PC-9 (cell line): ENCODE measurements at regions of chr9 and their contacts with region 1.

Region 1: DNA sequence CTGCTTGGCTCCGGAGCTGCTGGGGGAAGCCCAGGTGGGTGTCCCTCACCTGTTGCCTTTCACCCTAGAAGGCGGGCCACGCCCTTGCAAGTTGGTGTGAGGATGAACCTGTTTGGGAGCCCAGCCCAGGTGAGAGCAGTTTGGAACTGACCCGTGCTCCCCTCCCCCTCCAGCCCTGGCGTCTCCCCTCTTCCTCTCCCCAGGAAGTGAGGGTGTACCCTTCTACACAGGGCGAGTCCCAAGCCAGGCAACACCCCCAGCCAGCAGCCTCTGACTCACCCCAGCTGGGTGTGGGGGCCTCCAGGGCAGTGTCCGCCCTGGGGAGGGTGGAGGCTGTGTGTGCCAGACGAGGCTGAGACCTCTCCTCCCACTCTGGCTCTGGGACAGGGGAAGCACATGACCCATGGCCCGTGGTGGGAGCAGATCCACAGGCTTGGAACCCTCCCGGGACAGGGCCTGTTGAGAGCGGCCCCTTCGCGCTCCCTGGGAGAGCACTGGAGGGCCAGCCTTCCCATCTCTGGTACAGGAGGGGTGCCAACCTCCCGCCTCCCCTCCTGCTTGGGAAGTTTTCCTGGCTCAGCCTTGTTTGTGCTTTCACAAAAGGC is 10.5 kb downstream of the LRRC8A start:
- DNase-seq: peak; percentile 94 to 99
- H3K4me3 ChIP-seq: peak overlapping the region; percentile 31; the same call in 1 of the 2 replicates
- H3K27ac ChIP-seq: peak overlapping the region; percentile 79
- H3K4me1 ChIP-seq: peaks cover 26% of the 10 kb centered on the region
- H3K27me3 ChIP-seq: no peaks in the 10 kb centered on the region
- CTCF ChIP-seq: no peak

Region 2: GRCh38 chr9:128875790-128876160 is 16.6 kb before region 1 on chr9:
- CTCF ChIA-PET with region 1: no interaction called
- POLR2A ChIA-PET with region 1: no interaction called
- intact Hi-C with region 1: loop called (anchors 2 kb)
- DNase-seq: peak; percentile 63 to 81
- H3K4me3 ChIP-seq: no peak overlapping the region
- H3K27ac ChIP-seq: peak overlapping the region; percentile 92
- H3K4me1 ChIP-seq: peaks cover 29% of the 10 kb centered on the region
- H3K27me3 ChIP-seq: no peaks in the 10 kb centered on the region
- CTCF ChIP-seq: no peak

Region 3: DNA sequence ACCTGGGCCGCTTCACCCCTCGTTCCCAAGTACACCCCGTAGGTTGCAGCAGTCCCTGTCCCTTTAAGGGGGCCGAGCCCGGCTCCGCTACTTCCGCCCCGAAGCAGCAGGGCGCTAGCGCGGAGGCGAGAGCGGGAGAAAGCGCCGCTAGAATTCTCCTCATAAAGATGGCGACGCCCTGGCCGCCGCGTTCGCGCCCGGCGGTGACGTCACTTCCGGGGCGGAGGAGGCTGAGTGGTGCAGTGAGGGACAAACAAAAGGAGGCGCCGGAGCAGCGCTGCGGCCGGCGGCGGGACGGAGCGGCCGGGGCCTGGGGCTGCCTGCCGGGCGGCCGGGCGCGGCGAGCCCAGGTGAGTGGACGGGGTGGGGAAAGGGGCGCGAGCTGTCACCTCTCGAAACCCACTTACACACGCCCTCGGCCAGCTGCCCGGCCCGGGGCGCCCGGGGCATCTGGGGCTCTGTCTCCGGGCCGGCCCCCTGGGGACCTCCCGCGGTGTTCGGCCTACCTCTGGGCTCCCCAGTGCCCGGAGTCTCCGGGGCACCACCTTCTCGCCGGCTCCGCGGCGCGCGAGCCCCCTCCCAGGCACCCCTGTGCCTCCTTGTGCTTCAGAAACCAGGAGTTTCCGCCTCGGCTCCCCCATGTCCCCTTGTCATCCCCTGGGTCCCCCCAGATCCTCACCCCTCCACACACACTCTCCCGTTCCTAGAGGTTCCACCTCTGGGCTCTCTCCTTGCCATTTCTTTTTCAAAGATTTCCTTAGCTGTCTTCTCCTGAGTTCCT is 10.3 kb before region 1 on chr9 and contains the starts of genes KYAT1 and LRRC8A:
- CTCF ChIA-PET with region 1: no interaction called
- POLR2A ChIA-PET with region 1: interaction called, 4 read pairs
- intact Hi-C with region 1: loop called (anchors 1 kb)
- DNase-seq: peak; percentile 89 to 99
- H3K4me3 ChIP-seq: peak within 1 kb of the TSS; percentile 87
- H3K27ac ChIP-seq: peak within 1 kb of the TSS; percentile 77
- H3K4me1 ChIP-seq: peaks cover 20% of the 10 kb centered on the region
- H3K27me3 ChIP-seq: no peaks in the 10 kb centered on the region
- CTCF ChIP-seq: no peak
- total RNA-seq, gene KYAT1: 26.1 and 27.6 TPM in 2 replicates
- total RNA-seq, gene LRRC8A: 90.3 and 95.7 TPM in 2 replicates

Region 4: DNA sequence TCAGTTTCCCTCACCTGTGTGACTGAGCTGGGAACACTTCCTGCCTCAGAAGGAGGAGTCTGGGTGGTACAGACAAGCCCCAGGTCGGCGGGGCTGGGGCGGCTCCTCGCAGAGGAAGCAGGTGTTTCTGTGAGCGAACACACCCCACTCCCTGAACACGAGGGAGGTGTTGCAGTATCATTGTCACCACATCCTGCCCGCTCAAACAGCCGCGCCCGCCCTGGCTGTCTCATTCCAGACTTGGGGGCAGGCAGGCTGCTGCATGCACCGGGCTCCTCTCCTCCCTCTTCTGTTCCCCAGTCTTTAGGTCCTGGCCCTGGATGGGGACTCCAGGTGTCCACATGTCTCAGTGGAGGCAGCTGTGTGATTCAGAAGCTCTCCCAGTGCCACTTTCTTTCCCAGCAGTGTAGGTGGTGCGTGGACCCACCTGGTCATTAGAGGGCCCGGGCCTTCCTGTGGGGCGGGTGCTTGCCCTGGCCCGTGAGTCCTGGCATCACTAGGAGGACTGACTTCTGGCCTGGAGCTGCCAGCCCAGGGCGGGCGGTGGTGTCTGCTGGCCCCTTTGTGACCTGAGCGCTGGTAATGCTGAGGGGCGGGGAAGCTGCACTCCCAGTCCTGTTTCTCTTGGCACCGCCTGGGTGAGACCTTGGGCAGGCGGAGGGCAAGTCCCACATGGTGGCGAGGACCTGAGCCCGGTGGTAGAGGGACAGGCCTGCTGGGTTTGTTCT is 10.1 kb after region 1 on chr9:
- CTCF ChIA-PET with region 1: no interaction called
- POLR2A ChIA-PET with region 1: no interaction called
- intact Hi-C with region 1: loop called (anchors 1 kb)
- DNase-seq: peak; percentile 62 to 93
- H3K4me3 ChIP-seq: no peak overlapping the region; the same call in 1 of the 2 replicates
- H3K27ac ChIP-seq: peak overlapping the region; percentile 88
- H3K4me1 ChIP-seq: peaks cover 67% of the 10 kb centered on the region
- H3K27me3 ChIP-seq: no peaks in the 10 kb centered on the region
- CTCF ChIP-seq: no peak

Region 5: DNA sequence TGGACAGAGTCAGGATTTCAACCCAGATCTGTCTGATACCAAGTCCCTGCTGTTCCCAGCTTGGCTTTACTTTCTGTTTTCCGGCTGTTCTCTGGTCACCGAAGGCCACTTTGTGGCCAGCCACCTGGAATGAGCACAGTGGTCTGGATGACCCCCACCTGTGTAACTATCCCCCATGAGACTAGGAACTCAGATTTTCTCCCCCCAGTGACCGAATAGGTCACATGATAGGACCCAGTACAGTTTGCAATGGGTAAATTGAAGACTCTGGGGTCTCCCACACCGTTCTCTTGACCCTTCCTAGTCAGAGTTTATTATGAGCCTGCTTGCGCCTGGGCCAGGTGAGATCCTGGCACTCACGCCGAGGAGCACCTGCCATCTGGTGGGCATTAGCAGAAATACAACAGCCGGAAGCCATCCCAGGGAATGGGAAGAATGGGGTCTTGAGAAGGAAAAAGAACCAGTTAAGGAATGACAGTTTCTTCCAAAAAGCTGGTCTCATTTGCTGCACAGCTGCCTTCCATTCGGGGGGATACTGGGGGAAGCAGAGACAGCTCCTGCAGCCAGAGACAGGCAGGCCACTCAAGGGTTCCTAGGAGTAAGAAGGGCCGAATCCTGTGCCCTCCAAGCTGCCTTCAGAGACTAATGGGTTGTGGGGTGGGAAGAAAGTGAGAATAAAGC is 35.5 kb after region 1 on chr9:
- CTCF ChIA-PET with region 1: no interaction called
- POLR2A ChIA-PET with region 1: no interaction called
- intact Hi-C with region 1: loop called (anchors 2 kb)
- DNase-seq: peak in 1 of 2 experiments; percentile 70
- H3K4me3 ChIP-seq: no peak overlapping the region
- H3K27ac ChIP-seq: no peak overlapping the region
- H3K4me1 ChIP-seq: no peaks in the 10 kb centered on the region
- H3K27me3 ChIP-seq: no peaks in the 10 kb centered on the region
- CTCF ChIP-seq: peak; percentile 95

Region 6: DNA sequence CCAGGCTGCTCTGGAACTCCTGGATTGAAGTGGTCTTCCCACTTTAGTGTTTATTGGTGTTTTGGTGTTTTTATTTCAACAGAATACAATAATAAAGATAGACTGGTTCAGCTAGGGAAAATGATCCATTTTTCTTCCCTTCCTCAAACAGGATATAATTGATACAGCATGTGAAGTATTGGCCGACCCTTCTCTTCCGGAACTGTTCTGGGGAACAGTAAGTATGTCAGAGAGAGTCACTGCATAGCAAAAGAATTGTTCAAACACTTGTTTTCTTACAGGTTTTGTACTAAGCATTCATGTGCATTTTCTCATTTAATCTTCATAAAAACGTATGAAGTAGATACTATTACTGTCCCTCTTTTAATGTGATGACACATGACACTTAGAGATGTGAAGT is 86.7 kb after region 1 on chr9:
- CTCF ChIA-PET with region 1: no interaction called
- POLR2A ChIA-PET with region 1: no interaction called
- intact Hi-C with region 1: no loop called
- DNase-seq: no peak
- H3K4me3 ChIP-seq: no peak overlapping the region
- H3K27ac ChIP-seq: no peak overlapping the region
- H3K4me1 ChIP-seq: no peaks in the 10 kb centered on the region
- H3K27me3 ChIP-seq: no peaks in the 10 kb centered on the region
- CTCF ChIP-seq: no peak

Region 7: DNA sequence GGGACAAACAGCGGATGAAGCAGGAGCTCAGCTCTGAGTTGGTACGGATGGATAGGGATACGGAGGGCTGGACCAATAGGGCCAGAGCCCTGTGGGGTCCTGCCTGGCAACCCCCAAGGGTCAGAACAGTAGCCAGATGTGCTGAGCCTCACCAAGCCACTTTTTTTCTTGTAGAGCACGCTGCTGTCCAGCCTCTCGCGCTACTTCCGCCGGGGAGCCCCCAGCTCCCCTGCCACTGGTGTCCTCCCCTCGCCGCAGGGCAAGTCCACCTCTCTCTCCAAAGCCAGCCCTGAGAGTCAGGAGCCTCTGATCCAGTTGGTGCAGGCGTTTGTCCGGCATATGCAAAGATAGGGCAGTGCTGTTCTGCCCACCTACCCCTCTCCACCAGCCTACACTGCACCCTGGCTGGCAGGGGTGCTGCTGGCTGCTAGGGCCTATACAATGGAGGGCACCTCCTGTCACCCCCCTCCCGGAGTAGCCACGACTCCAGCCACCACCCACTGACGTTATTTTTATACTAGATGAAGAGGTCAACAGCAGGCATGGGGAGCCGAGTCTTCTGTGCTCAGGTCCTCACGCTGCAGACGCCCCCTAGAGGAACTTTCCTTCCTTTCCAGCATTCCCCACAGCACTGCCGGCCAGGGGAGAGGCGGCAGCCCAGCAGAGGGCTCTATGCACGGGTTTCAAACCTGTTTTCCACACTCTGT is 114.1 kb after region 1 on chr9:
- CTCF ChIA-PET with region 1: no interaction called
- POLR2A ChIA-PET with region 1: no interaction called
- intact Hi-C with region 1: no loop called
- DNase-seq: peak; percentile 58 to 77
- H3K4me3 ChIP-seq: no peak overlapping the region
- H3K27ac ChIP-seq: no peak overlapping the region
- H3K4me1 ChIP-seq: no peaks in the 10 kb centered on the region
- H3K27me3 ChIP-seq: no peaks in the 10 kb centered on the region
- CTCF ChIP-seq: peak; percentile 85